SK-N-SH (cell line): ENCODE measurements at regions of chr12 and their contacts with region 1.

Region 1: GRCh38 chr12:14207905-14208551 is 157.5 kb upstream of the ATF7IP start:
- DNase-seq: no peak
- H3K4me3 ChIP-seq: no peak overlapping the region
- H3K27ac ChIP-seq: no peak overlapping the region
- H3K4me1 ChIP-seq: no peaks in the 10 kb centered on the region
- H3K27me3 ChIP-seq: no peaks in the 10 kb centered on the region
- CTCF ChIP-seq: no peak
- EP300 ChIP-seq: no peak
- RAD21 ChIP-seq: no peak

Region 2: GRCh38 chr12:13973996-13974395 is 234.0 kb before region 1 on chr12:
- CTCF ChIA-PET with region 1: no interaction called
- POLR2A ChIA-PET with region 1: no interaction called
- DNase-seq: no peak
- H3K4me3 ChIP-seq: no peak overlapping the region
- H3K27ac ChIP-seq: no peak overlapping the region
- H3K4me1 ChIP-seq: no peaks in the 10 kb centered on the region
- H3K27me3 ChIP-seq: peaks cover 2% of the 10 kb centered on the region; the same call in 1 of the 2 replicates
- CTCF ChIP-seq: no peak
- EP300 ChIP-seq: no peak
- RAD21 ChIP-seq: no peak

Region 3: DNA sequence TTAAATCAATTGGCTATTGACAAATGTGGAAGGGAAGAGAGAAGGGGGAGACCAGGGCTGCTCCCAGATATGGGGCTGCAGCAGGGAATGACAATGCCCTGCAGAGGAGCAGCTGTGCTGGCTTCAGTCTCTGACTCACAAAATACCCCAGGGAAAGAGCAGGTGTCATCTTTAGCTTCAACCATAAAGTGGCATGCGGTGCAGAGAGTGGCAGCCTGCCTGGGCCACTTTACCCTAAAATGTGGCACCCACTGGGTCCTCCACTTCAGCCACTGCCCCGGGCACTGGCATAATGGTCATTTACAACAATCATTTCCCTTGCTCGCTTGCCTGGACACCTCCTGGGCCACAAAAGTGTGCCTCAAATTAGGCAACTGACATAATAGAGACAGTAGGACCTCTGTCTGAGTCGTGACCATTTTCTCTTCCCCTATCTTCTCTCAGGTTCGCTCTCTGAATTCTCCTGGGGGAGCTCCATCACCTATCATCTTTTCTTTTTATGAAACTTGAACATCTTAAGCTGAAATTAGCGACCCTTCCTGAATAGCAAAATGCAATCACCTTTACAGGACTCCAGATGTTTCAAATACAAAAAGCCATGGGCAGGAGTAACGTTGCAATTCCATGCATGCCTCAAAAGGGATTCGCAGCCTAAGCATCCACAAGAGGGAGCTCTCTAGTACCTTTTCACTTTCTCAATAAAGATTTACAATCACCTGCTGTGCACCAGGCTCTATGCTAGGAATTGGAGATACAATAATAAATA is 22.4 kb before region 1 on chr12:
- CTCF ChIA-PET with region 1: interaction called, 10 read pairs
- POLR2A ChIA-PET with region 1: no interaction called
- DNase-seq: peak; percentile 37
- H3K4me3 ChIP-seq: peak overlapping the region in 1 of 2 experiments; percentile 8; a peak in 1 of 4 replicates
- H3K27ac ChIP-seq: no peak overlapping the region
- H3K4me1 ChIP-seq: no peaks in the 10 kb centered on the region
- H3K27me3 ChIP-seq: no peaks in the 10 kb centered on the region
- CTCF ChIP-seq: peak; percentile 75
- EP300 ChIP-seq: no peak
- RAD21 ChIP-seq: peak; percentile 66

Region 4: GRCh38 chr12:14314801-14315200 is 106.8 kb after region 1 on chr12:
- CTCF ChIA-PET with region 1: no interaction called
- POLR2A ChIA-PET with region 1: no interaction called
- DNase-seq: no peak
- H3K4me3 ChIP-seq: no peak overlapping the region
- H3K27ac ChIP-seq: no peak overlapping the region
- H3K4me1 ChIP-seq: no peaks in the 10 kb centered on the region
- H3K27me3 ChIP-seq: no peaks in the 10 kb centered on the region
- CTCF ChIP-seq: no peak
- EP300 ChIP-seq: no peak
- RAD21 ChIP-seq: no peak